ENCODE measurements at regions of chr19 and their contacts with region 1.

Region 1: DNA sequence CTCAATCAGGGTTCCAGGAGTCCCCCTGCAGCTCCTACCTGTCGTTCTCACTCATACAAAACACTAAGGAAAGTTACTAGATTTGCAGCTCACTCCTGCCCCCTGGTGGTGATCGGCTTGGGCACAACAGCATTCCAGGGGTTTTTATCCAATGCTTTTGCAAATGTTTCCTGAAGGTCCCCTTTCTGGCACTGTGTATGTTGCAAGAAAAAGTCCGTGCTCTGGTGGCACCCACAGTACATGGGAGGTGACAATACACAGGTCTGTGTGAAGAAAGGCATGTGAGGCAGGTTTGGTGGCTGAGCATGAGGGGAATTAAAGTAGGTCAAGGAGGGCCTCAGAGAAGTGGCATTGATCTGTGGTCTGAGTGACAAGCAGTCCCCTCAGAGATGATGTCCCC is 8.6 kb upstream of the TYK2 start:
- DNase-seq: peak; percentile 91

Region 2: GRCh38 chr19:10052602-10053360 is 336.2 kb before region 1 on chr19:
- intact Hi-C with region 1: no loop called
- DNase-seq: no peak

Region 3: GRCh38 chr19:10259162-10259905 is 129.6 kb before region 1 on chr19:
- intact Hi-C with region 1: loop called (anchors 2 kb)
- DNase-seq: peak; percentile 86

Region 4: GRCh38 chr19:10269333-10270179 is 119.4 kb before region 1 on chr19:
- intact Hi-C with region 1: loop called (anchors 1 kb)
- DNase-seq: peak; percentile 95

Region 5: GRCh38 chr19:10431943-10432735 is 43.2 kb after region 1 on chr19:
- intact Hi-C with region 1: no loop called
- DNase-seq: peak; percentile 81

Measured in cardiac septum (tissue), 1 donor.